Mammary epithelial cell (primary cell): ENCODE measurements at regions of chr14 and their contacts with region 1.

Region 1: GRCh38 chr14:76876076-76876475 is 49.9 kb downstream of the LRRC74A start:
- DNase-seq: peak; percentile 63
- H3K4me3 ChIP-seq: no peak overlapping the region
- H3K27ac ChIP-seq: no peak overlapping the region
- H3K4me1 ChIP-seq: no peaks in the 10 kb centered on the region
- H3K27me3 ChIP-seq: no peaks in the 10 kb centered on the region
- CTCF ChIP-seq: peak; percentile 96 to 98

Region 2: GRCh38 chr14:76810953-76811400 is 65.1 kb before region 1 on chr14:
- CTCF ChIA-PET with region 1: interaction called, 15 read pairs
- dilution Hi-C with region 1: no loop called
- in situ Hi-C with region 1: no loop called
- intact Hi-C with region 1: no loop called
- DNase-seq: peak; percentile 26
- H3K4me3 ChIP-seq: peak overlapping the region in 2 of 3 experiments; percentile 1 to 86
- H3K27ac ChIP-seq: no peak overlapping the region
- H3K4me1 ChIP-seq: peaks cover 14% of the 10 kb centered on the region
- H3K27me3 ChIP-seq: no peaks in the 10 kb centered on the region
- CTCF ChIP-seq: peak; percentile 9 to 57

Region 3: DNA sequence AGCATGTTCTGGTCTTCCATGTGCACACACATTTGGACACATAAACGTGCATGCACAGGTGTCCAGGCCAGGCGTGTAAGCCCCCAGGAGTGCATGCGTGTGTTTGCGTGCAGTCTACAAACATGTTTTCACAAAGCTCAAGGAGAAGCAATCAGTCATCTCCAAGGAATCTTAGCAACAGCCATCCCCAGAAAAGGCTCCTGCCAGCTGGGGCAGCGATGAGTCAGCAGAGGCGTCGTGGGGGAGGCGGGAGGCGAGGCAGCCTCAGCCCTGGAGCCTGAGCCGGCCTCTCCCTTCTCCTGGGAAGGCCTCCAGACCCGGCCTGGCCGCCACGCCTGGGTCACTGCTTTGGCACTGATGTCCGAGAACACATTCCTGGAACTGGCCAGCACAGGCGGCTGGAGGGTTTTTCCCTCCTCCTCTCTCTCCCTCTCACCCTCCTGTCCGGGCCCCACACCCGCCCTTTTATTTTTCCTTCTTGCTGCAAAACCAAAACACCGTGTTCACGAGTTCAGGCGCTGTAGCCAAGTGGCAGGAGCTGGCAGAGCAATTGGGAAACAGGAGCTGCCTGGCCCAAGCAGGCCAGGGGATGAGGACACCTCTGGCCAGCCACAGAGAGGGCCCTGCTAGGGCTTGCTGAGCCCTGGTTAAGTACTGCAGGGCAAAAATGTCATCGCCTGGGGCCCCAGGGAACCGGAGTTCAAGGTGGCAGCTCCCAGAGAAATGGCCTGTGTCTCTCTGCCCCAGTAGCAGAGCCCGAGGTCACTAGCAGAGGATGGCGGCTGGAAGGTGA is 42.9 kb after region 1 on chr14:
- CTCF ChIA-PET with region 1: no interaction called
- dilution Hi-C with region 1: no loop called
- in situ Hi-C with region 1: no loop called
- intact Hi-C with region 1: loop called (anchors 1 kb)
- DNase-seq: peak; percentile 96
- H3K4me3 ChIP-seq: no peak overlapping the region
- H3K27ac ChIP-seq: peak overlapping the region; percentile 88
- H3K4me1 ChIP-seq: peaks cover 44% of the 10 kb centered on the region
- H3K27me3 ChIP-seq: no peaks in the 10 kb centered on the region
- CTCF ChIP-seq: peak in 1 of 2 donors; percentile 28

Region 4: DNA sequence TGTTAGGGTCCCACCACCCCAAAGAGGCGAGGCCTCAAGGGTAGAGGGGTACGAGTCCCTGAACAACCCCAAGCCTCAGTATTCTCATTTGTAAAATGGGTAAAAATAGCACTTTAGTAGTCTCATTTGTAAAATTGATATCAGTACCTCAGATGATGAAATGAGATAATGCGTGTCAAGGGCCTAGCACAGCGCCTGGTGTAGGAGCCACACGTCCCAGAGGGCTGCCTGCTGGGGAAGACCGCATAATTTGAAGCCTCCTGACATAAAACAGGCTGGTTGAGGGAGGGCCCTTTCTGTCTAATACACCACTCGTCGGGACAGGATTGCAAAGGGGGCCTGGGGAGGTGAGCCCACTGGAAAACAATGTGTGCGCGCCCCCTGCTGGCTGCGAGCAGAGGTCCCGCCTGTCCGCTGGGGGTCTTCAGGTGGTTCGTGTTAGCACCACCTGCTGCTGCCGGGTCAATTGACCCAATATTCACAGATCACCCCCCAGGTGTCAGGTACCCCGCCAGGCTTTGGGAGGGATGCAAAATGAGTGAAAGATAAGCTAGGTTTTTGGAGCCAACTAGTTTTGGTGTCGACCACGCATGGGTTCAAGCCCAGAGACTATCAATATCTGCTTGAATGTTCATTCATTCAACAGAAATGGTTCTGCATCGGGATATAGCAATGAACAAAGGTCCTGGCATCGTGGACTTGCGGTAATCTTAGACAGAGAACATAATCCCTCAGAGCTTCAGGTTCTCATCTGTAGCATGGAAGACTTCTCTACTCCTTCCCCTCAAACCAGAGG is 177.2 kb after region 1 on chr14:
- CTCF ChIA-PET with region 1: no interaction called
- dilution Hi-C with region 1: loop called (anchors 10 kb)
- in situ Hi-C with region 1: no loop called
- intact Hi-C with region 1: loop called (anchors 1 kb)
- DNase-seq: no peak
- H3K4me3 ChIP-seq: no peak overlapping the region
- H3K27ac ChIP-seq: no peak overlapping the region
- H3K4me1 ChIP-seq: peaks cover 14% of the 10 kb centered on the region
- H3K27me3 ChIP-seq: no peaks in the 10 kb centered on the region
- CTCF ChIP-seq: peak; percentile 65 to 88

Region 5: DNA sequence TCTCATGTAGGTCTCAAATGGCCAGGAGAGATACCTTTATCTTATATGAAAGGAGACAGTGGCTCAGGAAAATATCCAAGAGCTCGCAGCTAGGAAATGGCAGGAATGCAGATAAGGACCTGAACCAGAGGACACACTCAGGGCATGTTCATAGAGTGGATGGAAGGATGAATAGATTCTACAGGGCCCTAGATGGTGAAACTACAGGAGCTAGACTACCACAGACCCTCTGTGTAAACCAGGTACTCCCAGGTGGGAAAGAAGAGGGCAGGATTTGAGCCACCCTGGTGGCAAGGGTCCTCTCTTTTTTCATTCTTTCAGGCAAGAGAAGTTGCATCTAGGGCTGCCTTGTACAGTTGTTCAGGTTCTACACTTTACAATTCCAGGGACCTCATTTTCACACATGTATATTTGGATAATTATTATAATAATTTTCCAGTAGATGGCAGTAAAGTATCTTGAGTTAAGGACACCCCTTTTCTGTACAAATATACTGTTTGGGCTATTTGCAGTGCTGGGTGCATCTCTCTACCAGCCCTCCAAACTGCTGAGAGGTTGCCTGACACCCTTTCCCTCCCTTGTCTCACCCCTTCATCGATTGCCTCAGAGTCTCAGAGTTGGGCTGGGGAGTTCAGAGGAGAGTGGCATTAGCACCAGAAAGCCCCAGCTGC is 276.0 kb after region 1 on chr14:
- CTCF ChIA-PET with region 1: interaction called, 9 read pairs
- dilution Hi-C with region 1: no loop called
- in situ Hi-C with region 1: no loop called
- intact Hi-C with region 1: loop called (anchors 1 kb)
- DNase-seq: peak; percentile 20
- H3K4me3 ChIP-seq: no peak overlapping the region
- H3K27ac ChIP-seq: no peak overlapping the region
- H3K4me1 ChIP-seq: no peaks in the 10 kb centered on the region
- H3K27me3 ChIP-seq: no peaks in the 10 kb centered on the region
- CTCF ChIP-seq: peak; percentile 25 to 41

Region 6: GRCh38 chr14:77554207-77554606 is 678.1 kb after region 1 on chr14:
- CTCF ChIA-PET with region 1: no interaction called
- dilution Hi-C with region 1: no loop called
- in situ Hi-C with region 1: no loop called
- intact Hi-C with region 1: loop called (anchors 10 kb)
- DNase-seq: no peak
- H3K4me3 ChIP-seq: no peak overlapping the region
- H3K27ac ChIP-seq: no peak overlapping the region
- H3K4me1 ChIP-seq: no peaks in the 10 kb centered on the region
- H3K27me3 ChIP-seq: no peaks in the 10 kb centered on the region
- CTCF ChIP-seq: no peak